ENCODE measurements at regions of chr6 and their contacts with region 1.

Region 1: GRCh38 chr6:722077-722524 is 29.2 kb upstream of the EXOC2 start:
- H3K4me3 ChIP-seq: no peak overlapping the region
- H3K27ac ChIP-seq: no peak overlapping the region
- H3K4me1 ChIP-seq: no peaks in the 10 kb centered on the region
- CTCF ChIP-seq: peak; percentile 72

Region 2: DNA sequence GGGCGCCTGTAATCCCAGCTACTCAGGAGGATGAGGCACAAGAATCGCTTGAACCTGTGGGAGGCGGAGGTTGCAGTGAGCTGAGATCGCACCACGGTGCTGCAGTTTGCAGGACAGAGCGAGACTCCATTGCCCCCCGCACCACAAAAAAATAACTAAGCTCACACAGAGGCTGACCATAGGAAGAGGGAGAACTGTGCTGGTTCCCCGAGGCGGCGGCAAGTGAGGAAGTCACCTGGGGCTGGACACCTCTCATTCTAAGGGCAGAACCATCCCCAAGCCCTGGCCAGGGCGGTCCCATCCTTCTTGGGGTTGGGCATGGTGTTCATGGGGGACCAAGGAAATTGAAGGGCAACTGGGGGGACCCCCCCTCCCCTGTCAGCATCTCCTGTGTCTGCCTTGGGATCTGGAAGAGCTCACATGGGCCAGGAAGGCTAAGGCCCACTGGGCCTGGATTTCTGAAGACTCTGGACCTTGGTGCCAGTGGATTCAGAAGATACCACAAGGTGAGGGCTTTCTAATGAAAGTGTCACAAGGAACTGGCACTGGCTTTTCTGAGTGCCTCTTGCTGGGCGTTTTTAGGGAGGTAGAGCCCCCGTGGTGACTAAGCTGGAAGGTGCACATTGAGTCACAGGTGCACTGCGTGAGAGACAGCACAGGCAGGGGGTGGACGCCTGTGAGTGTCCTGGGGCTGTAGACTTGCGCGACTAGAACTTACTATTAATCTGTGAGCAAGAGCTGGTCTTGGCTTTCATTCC is 319.0 kb before region 1 on chr6:
- CTCF ChIA-PET with region 1: no interaction called
- POLR2A ChIA-PET with region 1: no interaction called
- H3K4me3 ChIP-seq: no peak overlapping the region
- H3K27ac ChIP-seq: no peak overlapping the region
- H3K4me1 ChIP-seq: no peaks in the 10 kb centered on the region
- CTCF ChIP-seq: no peak

Region 3: DNA sequence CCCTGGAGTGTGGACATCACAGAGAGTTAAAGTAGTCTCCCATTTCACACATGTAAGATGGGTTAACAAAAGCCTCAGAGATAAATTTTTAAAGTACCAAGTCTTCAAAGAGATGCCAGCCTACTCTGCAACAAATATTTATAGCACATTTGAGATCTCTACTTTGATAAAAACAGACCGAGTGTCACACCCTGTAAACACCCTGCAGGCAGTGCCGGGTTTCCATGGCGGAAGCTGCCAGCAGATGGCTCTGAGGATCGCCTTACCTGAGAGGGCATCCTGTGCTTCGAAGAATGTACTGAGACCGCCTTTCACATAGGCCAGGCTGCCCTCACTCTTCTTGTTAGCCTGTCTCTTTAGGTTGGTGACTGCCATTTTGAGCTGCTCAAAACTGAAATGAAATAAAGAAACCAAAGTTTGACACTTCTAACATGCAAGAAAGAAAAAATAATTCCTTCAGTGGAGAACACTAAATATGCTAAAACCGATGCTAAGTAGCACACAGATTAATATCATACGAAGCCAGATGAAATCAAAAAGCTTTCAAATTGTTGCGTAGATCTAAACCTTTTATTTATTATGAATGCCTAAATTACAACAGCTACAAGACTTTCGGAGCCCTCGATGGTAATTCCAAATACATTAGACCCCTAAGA is 104.5 kb before region 1 on chr6:
- CTCF ChIA-PET with region 1: interaction called, 10 read pairs
- POLR2A ChIA-PET with region 1: no interaction called
- H3K4me3 ChIP-seq: no peak overlapping the region
- H3K27ac ChIP-seq: no peak overlapping the region
- H3K4me1 ChIP-seq: no peaks in the 10 kb centered on the region
- CTCF ChIP-seq: no peak

Region 4: GRCh38 chr6:701700-702479 is 20.2 kb before region 1 on chr6:
- CTCF ChIA-PET with region 1: interaction called, 19 read pairs
- POLR2A ChIA-PET with region 1: no interaction called
- H3K4me3 ChIP-seq: no peak overlapping the region
- H3K27ac ChIP-seq: no peak overlapping the region
- H3K4me1 ChIP-seq: no peaks in the 10 kb centered on the region; the same call in 1 of the 2 replicates
- CTCF ChIP-seq: peak; percentile 28; the same call in 1 of the 2 replicates

Region 5: GRCh38 chr6:733431-734219 is 11.5 kb after region 1 on chr6:
- CTCF ChIA-PET with region 1: interaction called, 50 read pairs
- POLR2A ChIA-PET with region 1: no interaction called
- H3K4me3 ChIP-seq: no peak overlapping the region
- H3K27ac ChIP-seq: no peak overlapping the region
- H3K4me1 ChIP-seq: no peaks in the 10 kb centered on the region
- CTCF ChIP-seq: no peak

Region 6: GRCh38 chr6:747028-747427 is 24.9 kb after region 1 on chr6:
- CTCF ChIA-PET with region 1: interaction called, 21 read pairs
- POLR2A ChIA-PET with region 1: no interaction called
- H3K4me3 ChIP-seq: no peak overlapping the region
- H3K27ac ChIP-seq: no peak overlapping the region
- H3K4me1 ChIP-seq: no peaks in the 10 kb centered on the region
- CTCF ChIP-seq: no peak

Region 7: GRCh38 chr6:1445650-1446330 is 723.7 kb after region 1 on chr6:
- CTCF ChIA-PET with region 1: interaction called, 12 read pairs
- POLR2A ChIA-PET with region 1: no interaction called
- H3K4me3 ChIP-seq: no peak overlapping the region
- H3K27ac ChIP-seq: no peak overlapping the region
- H3K4me1 ChIP-seq: no peaks in the 10 kb centered on the region
- CTCF ChIP-seq: no peak